ENCODE measurements at regions of chr19 and their contacts with region 1.

Region 1: DNA sequence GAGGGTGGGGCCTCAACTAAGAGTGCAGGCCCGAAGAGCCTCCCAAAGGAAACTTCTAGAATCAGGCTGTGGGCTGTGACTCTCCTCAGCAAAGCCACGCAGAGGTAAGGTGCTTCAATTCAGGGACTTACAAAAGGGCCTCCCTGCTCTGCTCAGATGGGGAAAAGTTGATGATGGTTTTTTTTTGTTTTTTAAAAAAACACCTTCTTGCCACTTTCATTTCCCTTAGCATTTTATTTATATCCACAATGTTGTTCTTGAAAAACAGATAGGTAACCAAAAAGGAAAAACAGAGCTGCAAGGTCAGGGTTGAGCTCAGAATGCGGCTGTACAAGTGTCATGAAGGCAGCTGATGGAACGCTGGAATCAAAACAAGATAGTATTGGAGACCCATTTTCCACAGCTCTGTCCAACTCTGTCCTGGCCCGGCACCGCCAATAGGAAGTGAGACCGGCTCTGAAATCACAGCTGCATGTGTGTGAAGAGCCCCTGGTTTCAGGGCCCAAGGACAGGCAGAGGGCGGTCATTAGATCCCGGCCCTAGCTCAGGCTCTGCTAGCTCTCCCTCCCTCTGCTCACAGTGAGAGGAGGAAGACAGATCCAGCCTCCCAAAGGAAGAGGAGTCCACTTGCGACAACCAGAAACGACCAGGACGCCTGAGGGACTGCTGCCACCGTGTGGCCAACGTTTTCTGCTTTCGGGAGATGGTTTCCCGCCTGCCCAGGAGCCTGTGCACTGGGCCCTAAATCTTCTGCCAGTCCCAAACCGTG is 58.3 kb downstream of the KLF2 start:
- DNase-seq: peak; percentile 34 to 84 (median 70)

Region 2: GRCh38 chr19:16247353-16248182 is 135.4 kb before region 1 on chr19:
- intact Hi-C with region 1: loop called (anchors 5 kb)
- DNase-seq: peak; percentile 60 to 91 (median 78)

Measured in head of caudate nucleus (tissue), 42 donors.